ENCODE measurements at regions of chr2 and their contacts with region 1.

Region 1: DNA sequence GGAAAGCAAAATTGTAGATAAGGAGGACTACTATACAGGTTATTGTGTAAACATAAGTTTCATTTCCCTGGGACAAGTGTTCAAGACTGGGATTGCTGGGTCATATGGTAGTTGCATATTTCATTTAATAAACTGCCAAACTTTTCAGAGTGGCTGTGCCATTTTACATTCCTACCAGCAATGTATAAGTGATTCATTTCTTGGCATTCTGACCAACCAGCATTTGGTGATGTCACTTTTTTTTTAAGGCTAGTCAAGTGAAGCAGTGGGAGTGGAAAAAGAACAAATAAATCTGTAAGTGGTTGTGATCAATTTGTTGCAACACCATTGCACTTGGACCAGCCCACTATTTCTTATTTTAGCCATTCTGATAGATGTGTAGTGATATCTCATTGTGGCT is 5.2 kb upstream of the CHCHD5 start:
- DNase-seq: no peak
- ATAC-seq: no peak
- H3K4me3 ChIP-seq: no peak overlapping the region
- H3K4me3 Mint-ChIP-seq: no peak overlapping the region
- H3K27ac ChIP-seq: no peak overlapping the region
- H3K27ac Mint-ChIP-seq: no peak overlapping the region
- H3K4me1 ChIP-seq: peaks cover 11% of the 10 kb centered on the region
- H3K4me1 Mint-ChIP-seq: peaks cover 19% of the 10 kb centered on the region
- H3K27me3 ChIP-seq: no peaks in the 10 kb centered on the region
- H3K27me3 Mint-ChIP-seq: no peaks in the 10 kb centered on the region
- CTCF ChIP-seq: no peak

Region 2: DNA sequence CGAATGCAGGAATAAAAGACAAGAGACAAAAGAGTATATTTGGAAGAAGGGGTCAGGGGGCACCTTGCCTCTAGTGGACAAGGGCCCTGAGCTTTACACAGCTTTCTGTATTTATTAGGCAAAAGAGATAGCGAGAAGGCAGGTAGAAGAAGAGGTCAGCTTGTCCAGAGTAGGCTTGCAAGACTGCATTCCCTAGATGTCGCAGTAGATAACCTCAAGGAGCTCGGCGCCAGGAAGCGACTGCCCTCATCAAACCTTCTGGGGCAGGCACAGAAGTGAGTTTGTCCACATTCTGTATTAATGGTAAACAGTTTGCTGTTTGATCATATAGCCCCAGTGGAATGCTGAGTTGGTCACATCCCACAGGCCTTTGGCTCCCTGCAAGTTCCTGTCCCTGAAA is 12.1 kb after region 1 on chr2:
- CTCF ChIA-PET with region 1: no interaction called
- POLR2A ChIA-PET with region 1: no interaction called
- intact Hi-C with region 1: loop called in 1 of 2 experiments (anchors 1 kb)
- DNase-seq: no peak
- ATAC-seq: no peak
- H3K4me3 ChIP-seq: no peak overlapping the region
- H3K4me3 Mint-ChIP-seq: no peak overlapping the region
- H3K27ac ChIP-seq: no peak overlapping the region
- H3K27ac Mint-ChIP-seq: no peak overlapping the region
- H3K4me1 ChIP-seq: peaks cover 3% of the 10 kb centered on the region
- H3K4me1 Mint-ChIP-seq: peaks cover 9% of the 10 kb centered on the region
- H3K27me3 ChIP-seq: no peaks in the 10 kb centered on the region
- H3K27me3 Mint-ChIP-seq: no peaks in the 10 kb centered on the region
- CTCF ChIP-seq: no peak